Cardiac septum (tissue), 1 donor: ENCODE measurements at regions of chrX and their contacts with region 1.

Region 1: GRCh38 chrX:139932901-139933796 is at the start of gene ATP11C:
- DNase-seq: peak; percentile 91
- total RNA-seq, gene ATP11C: 5.8 TPM

Region 2: GRCh38 chrX:139831675-139832456 is 101.3 kb before region 1 on chrX:
- intact Hi-C with region 1: loop called (anchors 5 kb)
- DNase-seq: no peak

Region 3: DNA sequence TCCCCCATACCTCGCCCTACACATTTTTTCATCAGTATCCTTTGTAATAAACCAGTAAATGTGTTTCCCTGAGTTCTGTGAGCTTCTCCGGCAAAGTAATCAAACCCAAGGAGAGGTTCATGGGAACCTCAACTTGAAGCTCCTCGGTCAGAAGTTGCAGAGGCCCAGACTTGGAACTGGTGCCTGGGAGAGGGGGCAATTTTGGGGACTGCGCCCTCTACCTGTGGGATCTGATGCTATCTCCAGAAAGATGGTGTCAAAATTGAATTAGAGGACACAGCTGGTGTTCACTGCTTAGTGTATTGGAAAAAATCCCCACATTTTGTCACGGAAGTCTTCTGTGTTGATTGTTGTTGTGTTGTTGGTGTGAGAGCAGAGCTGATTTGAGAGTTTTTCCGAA is 70.9 kb before region 1 on chrX:
- intact Hi-C with region 1: no loop called
- DNase-seq: no peak

Region 4: GRCh38 chrX:139881572-139881971 is 51.6 kb before region 1 on chrX:
- intact Hi-C with region 1: loop called (anchors 5 kb)
- DNase-seq: no peak